Activated T-helper 2 cell treated with anti-CD3 and anti-CD28 coated beads, Interferon-gamma antibody, Interleukin-2, Interleukin-4, amounts not matched to agents 10 μg/mL and 5 μg/mL and 100 μg/mL, durations not matched to agents 14 hours and 24 hours and 36 hours (primary cell): ENCODE measurements at regions of chr2 and their contacts with region 1.

Region 1: GRCh38 chr2:7725171-7725849 is 808.1 kb downstream of the RNF144A start:
- DNase-seq: peak; percentile 51
- H3K4me3 Mint-ChIP-seq: peak overlapping the region; percentile 89
- H3K27ac Mint-ChIP-seq: peak overlapping the region; percentile 90
- H3K4me1 Mint-ChIP-seq: peaks cover 58% of the 10 kb centered on the region
- H3K27me3 Mint-ChIP-seq: no peaks in the 10 kb centered on the region

Region 2: DNA sequence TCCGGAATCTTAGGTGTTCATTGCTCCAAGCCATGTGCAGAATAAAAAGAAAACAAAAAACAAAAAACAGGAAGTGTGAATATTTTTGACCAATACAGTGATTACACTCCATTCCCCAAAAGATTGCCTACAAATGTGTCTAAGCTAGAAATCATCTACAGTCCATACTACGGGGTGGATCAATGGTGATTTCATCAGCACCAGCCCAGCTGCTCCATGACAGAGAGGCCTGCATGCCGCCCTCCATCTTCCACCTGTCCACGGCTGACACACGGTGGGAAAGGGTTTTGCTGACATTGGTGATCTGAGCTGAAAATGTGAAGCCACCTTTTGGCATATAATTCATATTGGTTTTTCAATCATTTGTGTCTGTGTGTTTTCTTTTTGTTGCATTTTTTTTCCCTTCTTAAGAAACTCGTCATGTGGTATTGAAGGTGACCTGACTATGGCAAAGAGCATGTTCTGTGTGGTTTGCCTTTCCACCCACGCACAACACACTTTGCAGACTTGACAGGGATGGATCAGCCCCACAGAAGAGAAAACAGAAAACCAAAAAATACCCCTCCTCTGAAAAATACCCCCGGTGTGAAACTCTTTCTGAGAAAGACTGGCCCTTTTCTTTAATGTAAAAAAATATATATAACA is 275.0 kb before region 1 on chr2:
- intact Hi-C with region 1: loop called (anchors 1 kb)
- DNase-seq: peak; percentile 59
- H3K4me3 Mint-ChIP-seq: peak overlapping the region; percentile 26
- H3K27ac Mint-ChIP-seq: peak overlapping the region; percentile 99
- H3K4me1 Mint-ChIP-seq: peaks cover 85% of the 10 kb centered on the region
- H3K27me3 Mint-ChIP-seq: no peaks in the 10 kb centered on the region

Region 3: DNA sequence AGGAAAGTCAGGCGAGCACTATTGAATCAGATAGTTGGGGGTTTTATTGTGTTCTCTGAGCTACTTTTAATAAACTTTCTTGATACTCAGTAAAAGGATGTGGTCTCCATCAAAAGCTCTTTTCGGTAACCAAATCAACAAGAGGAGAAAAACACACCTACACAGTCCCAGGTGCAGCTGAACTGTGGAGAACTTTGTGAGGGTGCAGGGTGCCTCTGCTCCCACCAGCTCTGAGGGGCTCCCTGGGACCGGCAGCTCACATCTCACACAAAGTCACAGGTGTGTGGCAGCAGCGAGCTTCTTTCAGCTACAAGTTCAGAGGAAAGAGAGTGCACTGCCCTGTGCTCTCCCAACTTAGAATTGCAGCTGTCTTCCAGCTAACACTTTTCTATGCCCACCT is 157.7 kb before region 1 on chr2:
- intact Hi-C with region 1: loop called (anchors 5 kb)
- DNase-seq: peak; percentile 53
- H3K4me3 Mint-ChIP-seq: peak overlapping the region; percentile 37
- H3K27ac Mint-ChIP-seq: peak overlapping the region; percentile 82
- H3K4me1 Mint-ChIP-seq: peaks cover 63% of the 10 kb centered on the region
- H3K27me3 Mint-ChIP-seq: no peaks in the 10 kb centered on the region

Region 4: GRCh38 chr2:7672027-7672684 is 53.2 kb before region 1 on chr2:
- intact Hi-C with region 1: loop called (anchors 2 kb)
- DNase-seq: peak; percentile 51
- H3K4me3 Mint-ChIP-seq: peak overlapping the region; percentile 63
- H3K27ac Mint-ChIP-seq: peak overlapping the region; percentile 97
- H3K4me1 Mint-ChIP-seq: peaks cover 60% of the 10 kb centered on the region
- H3K27me3 Mint-ChIP-seq: no peaks in the 10 kb centered on the region

Region 5: DNA sequence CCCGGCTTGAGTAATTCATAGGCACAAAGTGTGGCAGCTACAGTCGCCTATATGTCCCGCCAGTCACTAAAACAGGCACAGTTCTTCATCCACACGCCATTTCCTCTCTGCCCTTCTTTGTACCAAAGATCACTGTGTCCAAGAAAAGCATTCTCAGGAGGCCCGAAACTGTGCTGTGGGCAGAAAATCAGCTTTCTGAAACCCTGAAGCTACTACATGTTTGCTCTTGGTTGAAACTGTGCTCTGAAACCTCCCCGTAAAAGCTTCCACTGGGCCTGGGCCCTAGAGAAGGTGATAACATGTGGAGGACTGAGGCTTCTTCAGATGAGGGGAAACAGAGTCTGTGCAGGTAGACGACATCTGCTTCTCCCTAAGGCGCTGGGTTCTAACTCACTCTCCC is 880.9 kb after region 1 on chr2:
- intact Hi-C with region 1: loop called (anchors 10 kb)
- DNase-seq: no peak
- H3K4me3 Mint-ChIP-seq: no peak overlapping the region
- H3K27ac Mint-ChIP-seq: peak overlapping the region; percentile 53
- H3K4me1 Mint-ChIP-seq: peaks cover 55% of the 10 kb centered on the region
- H3K27me3 Mint-ChIP-seq: peaks cover 7% of the 10 kb centered on the region